Dorsolateral prefrontal cortex (tissue), 120 donors: ENCODE measurements at regions of chr6 and their contacts with region 1.

Region 1: GRCh38 chr6:82270881-82271645 is 23.5 kb upstream of the IBTK start:
- DNase-seq: no peak
- H3K4me3 ChIP-seq: peak overlapping the region in 30 of 59 donors; percentile 1 to 52 (median 29)
- H3K27ac ChIP-seq: peak overlapping the region in 1 of 59 donors; percentile 2
- H3K27me3 ChIP-seq: no peaks in the 10 kb centered on the region
- CTCF ChIP-seq: peak; percentile 43 to 87 (median 70)

Region 2: GRCh38 chr6:82363351-82364086 is 92.5 kb after region 1 on chr6 and contains the start of gene TPBG:
- intact Hi-C with region 1: no loop called
- DNase-seq: peak in 3 of 10 donors; percentile 12 to 50 (median 44)
- H3K4me3 ChIP-seq: peak within 1 kb of the TSS; percentile 50 to 83 (median 64)
- H3K27ac ChIP-seq: peak within 1 kb of the TSS in 17 of 59 donors; percentile 1 to 64 (median 22)
- H3K27me3 ChIP-seq: peaks cover 0 to 68% (median 25%) of the 10 kb centered on the region in 45 donors
- CTCF ChIP-seq: peak in 16 of 56 donors; percentile 8 to 29 (median 17)
- total RNA-seq, gene TPBG: 3.1 to 34.2 (median 12.0) TPM

Region 3: GRCh38 chr6:82616386-82617028 is 345.4 kb after region 1 on chr6:
- intact Hi-C with region 1: loop called in 1 of 2 experiments (anchors 5 kb)
- DNase-seq: no peak
- H3K4me3 ChIP-seq: no peak overlapping the region
- H3K27ac ChIP-seq: no peak overlapping the region
- H3K27me3 ChIP-seq: no peaks in the 10 kb centered on the region
- CTCF ChIP-seq: peak in 39 of 56 donors; percentile 9 to 59 (median 32)

Region 4: DNA sequence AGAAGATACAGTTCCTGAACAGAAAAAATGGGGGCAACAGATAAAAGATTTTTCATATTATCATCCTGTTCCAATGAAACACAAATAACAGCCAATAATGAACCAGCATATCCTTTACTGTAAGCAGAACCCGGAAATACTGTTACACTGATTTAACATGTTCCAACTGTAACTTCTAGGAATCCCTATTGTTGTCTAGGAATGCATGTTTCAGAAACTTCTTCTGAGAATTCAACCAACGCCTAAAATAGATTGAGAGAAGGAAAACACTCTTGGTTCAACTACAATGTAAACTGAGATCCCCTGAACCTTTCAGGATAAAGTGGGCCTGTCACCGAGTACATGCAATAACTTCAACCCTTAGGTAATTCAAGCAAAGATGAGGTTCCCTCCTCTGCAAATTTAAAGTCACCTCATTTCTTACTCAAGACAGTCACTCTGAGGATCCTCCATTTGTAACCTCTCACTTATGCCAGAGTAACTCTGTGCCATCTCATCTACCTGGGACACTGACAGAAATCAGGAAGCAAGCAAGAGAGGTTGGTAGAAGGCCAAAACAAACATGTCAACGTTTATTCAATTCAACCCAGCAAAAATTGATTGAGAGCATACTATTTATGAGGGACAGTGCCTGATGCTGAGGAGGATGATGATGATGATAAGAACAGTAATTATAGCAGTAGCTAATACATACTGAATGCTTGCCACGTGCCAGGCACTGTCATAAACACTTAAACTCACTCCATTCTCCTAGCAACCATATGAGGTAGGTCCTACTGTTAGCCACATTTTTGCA is 780.5 kb after region 1 on chr6:
- intact Hi-C with region 1: loop called (anchors 2 to 5 kb)
- DNase-seq: no peak
- H3K4me3 ChIP-seq: no peak overlapping the region
- H3K27ac ChIP-seq: no peak overlapping the region
- H3K27me3 ChIP-seq: no peaks in the 10 kb centered on the region
- CTCF ChIP-seq: no peak

Region 5: DNA sequence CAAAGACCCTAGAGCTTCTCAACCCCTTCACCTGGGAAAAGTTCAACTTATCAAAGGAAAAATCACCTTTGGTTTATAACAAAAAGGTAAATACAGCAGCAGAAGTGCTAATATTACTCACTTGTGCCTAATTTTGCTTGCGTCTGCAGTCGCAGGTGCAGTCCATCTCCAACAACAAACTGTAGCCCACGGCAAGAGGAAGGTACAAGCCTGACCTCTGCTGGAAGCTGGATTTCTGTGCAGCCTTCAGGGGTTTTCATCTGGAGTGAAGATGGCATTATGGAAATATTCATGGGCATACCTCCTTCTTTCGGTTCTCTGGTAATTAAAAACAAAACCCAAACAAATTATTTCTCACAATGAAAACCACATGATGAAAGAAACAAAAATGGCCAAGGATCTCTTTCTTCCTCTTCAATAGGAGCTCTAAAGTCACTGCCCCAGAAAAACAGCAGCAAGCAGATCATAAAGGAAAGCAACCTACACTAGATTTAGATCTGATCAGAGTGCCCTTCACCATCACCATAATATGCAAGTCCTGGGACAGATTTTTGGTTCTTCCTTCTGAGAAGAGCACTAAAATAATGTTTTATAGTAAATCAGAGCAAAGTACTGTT is 786.8 kb after region 1 on chr6:
- intact Hi-C with region 1: loop called (anchors 2 to 5 kb)
- DNase-seq: peak in 8 of 10 donors; percentile 23 to 66 (median 58)
- H3K4me3 ChIP-seq: peak overlapping the region in 7 of 59 donors; percentile 4 to 30 (median 21)
- H3K27ac ChIP-seq: no peak overlapping the region
- H3K27me3 ChIP-seq: no peaks in the 10 kb centered on the region
- CTCF ChIP-seq: peak; percentile 36 to 84 (median 70)